ENCODE measurements at regions of chr10 and their contacts with region 1.

Region 1: DNA sequence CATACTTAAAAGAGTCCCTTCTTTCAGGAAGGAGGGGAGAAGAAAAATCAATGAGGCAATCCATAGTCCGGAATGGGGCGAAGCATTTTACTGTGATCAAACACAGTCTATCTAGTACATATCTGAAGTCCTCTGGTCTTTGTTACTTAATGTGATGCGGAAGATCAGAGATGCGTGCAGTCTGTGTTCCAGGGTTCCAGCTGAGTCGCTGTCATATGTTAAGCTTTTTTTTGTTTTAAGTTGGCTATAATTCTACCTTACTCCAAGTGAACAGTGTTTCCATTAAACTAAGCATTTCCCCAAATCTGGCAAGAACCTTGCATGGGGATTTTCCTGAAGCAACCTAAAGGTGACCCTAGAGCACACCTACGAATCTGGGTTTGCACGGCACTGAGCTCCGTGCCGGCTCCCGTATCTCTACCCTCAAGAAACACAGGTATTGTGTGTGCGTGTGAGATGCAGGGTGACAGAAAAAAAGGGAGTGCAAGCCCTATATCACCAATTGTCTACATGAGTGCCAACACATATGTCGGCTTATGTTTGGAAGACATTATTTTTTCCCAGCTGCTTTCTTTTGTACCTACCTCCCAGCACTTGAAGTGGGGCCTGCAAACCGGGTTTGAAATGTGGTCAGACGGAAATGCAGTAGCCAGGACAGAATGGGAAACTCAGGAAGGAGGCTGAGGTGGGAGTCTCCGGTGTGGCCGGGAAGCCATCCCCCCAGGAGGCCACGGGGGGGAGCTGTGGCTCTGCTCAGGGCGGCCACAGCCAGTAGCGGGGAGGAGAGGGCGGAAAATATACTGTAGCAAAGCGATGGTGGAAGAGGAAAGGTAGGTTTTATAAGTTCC is 435.8 kb upstream of the MGMT start:
- DNase-seq: no peak
- ATAC-seq: peak; percentile 94
- H3K4me3 ChIP-seq: no peak overlapping the region
- H3K27ac ChIP-seq: no peak overlapping the region
- H3K4me1 ChIP-seq: no peaks in the 10 kb centered on the region
- H3K27me3 ChIP-seq: no peaks in the 10 kb centered on the region; the same call in 1 of the 2 replicates
- CTCF ChIP-seq: peak; percentile 45 to 96 (median 83); a peak in 5 of 6 replicates
- POLR2A ChIP-seq: no peak
- RAD21 ChIP-seq: peak; percentile 85

Region 2: DNA sequence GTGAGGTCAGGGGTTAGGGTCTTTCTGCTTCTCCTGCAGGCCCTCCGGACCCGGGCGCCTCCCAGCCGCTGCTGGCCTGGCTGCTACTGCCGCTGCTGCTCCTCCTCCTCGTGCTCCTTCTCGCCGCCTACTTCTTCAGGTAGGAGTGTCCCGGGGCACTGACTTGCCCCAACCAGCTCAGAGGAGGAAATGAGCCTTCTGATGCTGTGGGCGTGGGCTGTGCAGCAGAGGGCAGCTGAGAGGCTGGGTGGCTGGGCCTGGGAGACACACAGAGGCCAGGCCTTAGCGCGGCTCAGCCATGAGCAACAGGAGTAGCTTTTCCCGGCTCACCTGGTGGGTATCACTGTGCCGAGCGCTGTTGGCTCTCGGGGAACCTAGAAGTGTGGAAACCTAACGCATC is 983.9 kb before region 1 on chr10:
- CTCF ChIA-PET with region 1: no interaction called
- POLR2A ChIA-PET with region 1: no interaction called
- RAD21 ChIA-PET with region 1: no interaction called
- intact Hi-C with region 1: no loop called
- DNase-seq: peak; percentile 88
- ATAC-seq: peak; percentile 100
- H3K4me3 ChIP-seq: peak overlapping the region; percentile 43 to 52
- H3K27ac ChIP-seq: peak overlapping the region; percentile 34; the same call in 1 of the 2 replicates
- H3K4me1 ChIP-seq: peaks cover 10 to 23% of the 10 kb centered on the region in 2 experiments; a peak in 3 of 4 replicates
- H3K27me3 ChIP-seq: no peaks in the 10 kb centered on the region
- CTCF ChIP-seq: no peak
- POLR2A ChIP-seq: peak; percentile 61
- RAD21 ChIP-seq: no peak

Region 3: DNA sequence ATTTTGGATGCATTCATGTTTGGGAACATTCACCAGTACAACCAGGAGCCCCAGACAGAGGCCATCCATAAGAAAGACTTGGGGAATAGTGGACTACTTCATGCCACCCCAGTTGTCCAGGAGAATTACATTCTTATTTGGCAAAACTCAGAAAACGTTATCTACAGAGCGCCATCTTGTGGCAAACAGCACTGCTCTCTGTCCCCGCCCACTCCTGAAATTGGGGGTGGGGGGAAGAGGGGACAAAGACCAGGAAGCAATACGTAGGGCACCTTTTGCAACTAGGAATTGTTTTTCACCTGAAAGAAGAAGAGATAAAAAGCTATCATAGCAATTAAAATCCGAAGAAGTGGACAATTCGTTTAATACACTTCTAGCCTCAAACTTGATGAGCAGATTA is 301.3 kb after region 1 on chr10:
- CTCF ChIA-PET with region 1: no interaction called
- POLR2A ChIA-PET with region 1: no interaction called
- RAD21 ChIA-PET with region 1: no interaction called
- intact Hi-C with region 1: loop called (anchors 1 kb)
- DNase-seq: peak; percentile 6
- ATAC-seq: peak; percentile 36; the same call in 1 of the 2 replicates
- H3K4me3 ChIP-seq: no peak overlapping the region
- H3K27ac ChIP-seq: no peak overlapping the region
- H3K4me1 ChIP-seq: no peaks in the 10 kb centered on the region
- H3K27me3 ChIP-seq: no peaks in the 10 kb centered on the region
- CTCF ChIP-seq: peak; percentile 31 to 82 (median 64); a peak in 5 of 6 replicates
- POLR2A ChIP-seq: no peak
- RAD21 ChIP-seq: peak; percentile 49

Region 4: GRCh38 chr10:130045091-130045652 is 1014.0 kb after region 1 on chr10:
- CTCF ChIA-PET with region 1: no interaction called
- POLR2A ChIA-PET with region 1: no interaction called
- RAD21 ChIA-PET with region 1: no interaction called
- intact Hi-C with region 1: loop called (anchors 5 kb)
- DNase-seq: peak; percentile 18
- ATAC-seq: peak; percentile 91
- H3K4me3 ChIP-seq: no peak overlapping the region
- H3K27ac ChIP-seq: no peak overlapping the region
- H3K4me1 ChIP-seq: no peaks in the 10 kb centered on the region
- H3K27me3 ChIP-seq: no peaks in the 10 kb centered on the region
- CTCF ChIP-seq: peak; percentile 65 to 94 (median 69)
- POLR2A ChIP-seq: no peak
- RAD21 ChIP-seq: peak; percentile 52